WTC11 (cell line): ENCODE measurements at regions of chr12 and their contacts with region 1.

Region 1: GRCh38 chr12:50103767-50104321 is at the start of gene GPD1:
- DNase-seq: peak; percentile 48
- ATAC-seq: peak; percentile 77
- H3K4me3 Mint-ChIP-seq: no peak within 1 kb of the TSS
- H3K27ac Mint-ChIP-seq: peak within 1 kb of the TSS; percentile 82; the same call in 1 of the 2 replicates
- H3K4me1 Mint-ChIP-seq: peaks cover 30% of the 10 kb centered on the region
- H3K27me3 Mint-ChIP-seq: no peaks in the 10 kb centered on the region
- CTCF ChIP-seq: no peak
- total RNA-seq, gene GPD1: 0.39 to 0.77 TPM (median 0.62 TPM) in 3 replicates

Region 2: GRCh38 chr12:50084775-50085614 is 18.8 kb before region 1 on chr12 and contains the start of gene SMARCD1:
- CTCF ChIA-PET with region 1: interaction called, 18 read pairs
- POLR2A ChIA-PET with region 1: interaction called, 6 read pairs
- DNase-seq: peak; percentile 96
- ATAC-seq: peak; percentile 93
- H3K4me3 Mint-ChIP-seq: peak within 1 kb of the TSS; percentile 89
- H3K27ac Mint-ChIP-seq: peak within 1 kb of the TSS; percentile 94
- H3K4me1 Mint-ChIP-seq: peaks cover 24% of the 10 kb centered on the region
- H3K27me3 Mint-ChIP-seq: peaks cover 26% of the 10 kb centered on the region
- CTCF ChIP-seq: no peak
- total RNA-seq, gene SMARCD1: 150 to 165 TPM (median 152 TPM) in 3 replicates

Region 3: GRCh38 chr12:50167041-50167828 is 63.4 kb after region 1 on chr12 and contains the start of gene CERS5:
- CTCF ChIA-PET with region 1: interaction called, 15 read pairs
- POLR2A ChIA-PET with region 1: interaction called, 8 read pairs
- DNase-seq: peak; percentile 99
- ATAC-seq: peak; percentile 95
- H3K4me3 Mint-ChIP-seq: peak within 1 kb of the TSS; percentile 87
- H3K27ac Mint-ChIP-seq: peak within 1 kb of the TSS; percentile 100
- H3K4me1 Mint-ChIP-seq: peaks cover 30% of the 10 kb centered on the region
- H3K27me3 Mint-ChIP-seq: no peaks in the 10 kb centered on the region
- CTCF ChIP-seq: 0 out of 2 replicates have a peak, but pooled peaks have one; percentile 23
- total RNA-seq, gene CERS5: 47.8 to 55.8 TPM (median 51.7 TPM) in 3 replicates

Region 4: DNA sequence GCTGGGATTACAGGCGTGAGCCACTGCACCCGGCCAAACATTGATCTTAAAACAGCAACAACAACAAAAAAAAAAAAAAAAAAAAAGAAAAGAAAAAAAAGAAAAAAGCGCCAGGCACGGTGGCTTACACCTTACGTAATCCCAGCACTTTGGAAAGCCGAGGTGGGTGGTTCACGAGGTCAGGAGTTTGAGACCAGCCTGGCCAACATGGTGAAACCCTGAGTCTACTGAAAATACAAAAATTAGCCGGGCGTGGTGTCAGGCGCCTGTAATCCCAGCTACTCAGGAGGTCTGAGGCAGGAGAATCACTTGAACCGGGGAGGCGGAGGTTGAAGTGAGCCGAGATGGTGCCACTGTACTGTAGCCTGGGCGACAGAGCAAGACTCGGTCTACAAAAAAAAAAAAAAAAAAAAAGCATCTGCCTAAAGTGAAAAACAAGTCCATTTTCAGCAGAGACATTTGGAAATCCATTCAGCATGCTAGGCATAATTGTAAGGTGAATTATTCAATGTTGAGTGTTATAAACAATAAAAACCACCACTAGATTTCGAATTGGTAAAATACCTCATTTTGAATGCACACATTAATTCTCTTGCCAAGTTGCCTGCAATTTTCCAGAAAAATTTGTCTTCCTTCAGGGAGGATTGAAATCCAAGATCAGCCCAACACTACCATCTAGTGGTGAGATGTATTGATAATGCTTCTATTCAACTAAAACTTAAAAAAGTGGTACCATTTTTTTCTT is 71.3 kb after region 1 on chr12:
- CTCF ChIA-PET with region 1: interaction called, 16 read pairs
- POLR2A ChIA-PET with region 1: no interaction called
- DNase-seq: no peak
- ATAC-seq: no peak
- H3K4me3 Mint-ChIP-seq: no peak overlapping the region
- H3K27ac Mint-ChIP-seq: peak overlapping the region; percentile 30; the same call in 1 of the 2 replicates
- H3K4me1 Mint-ChIP-seq: peaks cover 1% of the 10 kb centered on the region
- H3K27me3 Mint-ChIP-seq: no peaks in the 10 kb centered on the region
- CTCF ChIP-seq: peak; percentile 49